Activated naive CD4-positive, alpha-beta T cell treated with anti-CD3 and anti-CD28 coated beads for 36 hours (primary cell): ENCODE measurements at regions of chr5 and their contacts with region 1.

Region 1: DNA sequence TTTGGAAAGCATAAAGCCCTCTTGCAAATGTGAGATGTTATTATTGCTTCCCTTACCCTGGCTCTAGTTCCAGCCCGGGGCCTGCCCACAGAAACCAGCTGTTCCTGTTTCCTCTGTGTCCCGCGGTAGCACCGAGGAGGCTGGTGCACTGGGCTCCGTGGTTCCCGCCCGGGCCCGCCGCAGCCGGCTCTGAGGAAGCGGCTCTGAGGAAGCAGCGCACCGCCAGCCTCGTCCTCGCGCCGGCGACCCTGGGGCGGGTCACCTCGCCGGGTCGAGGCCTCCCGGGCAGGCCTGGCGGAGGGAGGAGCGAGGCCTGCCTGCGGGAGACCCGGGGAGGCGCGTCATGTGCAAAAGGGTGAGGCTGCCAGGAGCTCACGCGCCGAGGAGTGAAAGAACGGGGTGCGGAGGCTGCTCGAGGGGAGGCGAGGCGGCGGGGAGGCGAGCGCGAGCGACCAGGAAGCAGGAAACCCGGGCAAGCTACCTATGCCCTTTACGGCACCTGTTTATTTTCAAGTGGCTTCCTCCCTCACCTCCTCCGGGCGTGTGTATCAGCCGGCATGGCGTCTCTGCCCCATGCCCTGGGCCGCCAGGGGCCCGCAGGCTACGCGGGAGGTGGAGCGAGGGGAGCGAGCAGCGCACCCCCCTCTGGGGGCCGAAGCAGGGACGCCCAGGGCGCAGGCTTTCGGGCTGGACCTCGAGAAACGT is 61.3 kb upstream of the MEGF10 start:
- DNase-seq: peak; percentile 62
- H3K4me3 Mint-ChIP-seq: peak overlapping the region; percentile 66
- H3K27ac Mint-ChIP-seq: no peak overlapping the region
- H3K4me1 Mint-ChIP-seq: peaks cover 8% of the 10 kb centered on the region
- H3K27me3 Mint-ChIP-seq: no peaks in the 10 kb centered on the region

Region 2: DNA sequence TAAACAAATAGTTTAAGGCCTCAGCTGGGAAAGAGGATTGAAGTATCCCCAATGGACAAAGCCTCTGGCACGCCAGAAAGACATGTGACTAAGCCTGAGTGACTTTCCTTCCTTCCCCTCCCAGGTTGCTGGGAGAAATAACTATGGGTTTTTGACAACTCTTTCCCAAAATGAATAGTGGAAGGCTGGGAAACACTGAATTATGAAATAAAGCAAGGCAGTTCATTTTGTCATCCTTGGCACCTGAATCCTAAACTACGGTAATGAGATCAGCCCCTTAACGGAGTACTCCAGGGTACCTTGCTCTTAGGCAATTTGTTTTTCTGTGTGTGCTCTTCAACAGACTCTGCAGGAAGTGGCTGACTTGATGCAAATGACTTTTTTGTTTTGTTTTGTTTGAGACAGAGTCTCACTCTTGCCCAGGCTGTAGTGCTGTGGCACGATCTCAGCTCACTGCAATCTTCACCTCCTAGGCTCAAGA is 377.2 kb before region 1 on chr5:
- CTCF ChIA-PET with region 1: no interaction called
- intact Hi-C with region 1: loop called (anchors 5 kb)
- DNase-seq: peak; percentile 24
- H3K4me3 Mint-ChIP-seq: no peak overlapping the region
- H3K27ac Mint-ChIP-seq: peak overlapping the region; percentile 81
- H3K4me1 Mint-ChIP-seq: peaks cover 50% of the 10 kb centered on the region
- H3K27me3 Mint-ChIP-seq: no peaks in the 10 kb centered on the region

Region 3: DNA sequence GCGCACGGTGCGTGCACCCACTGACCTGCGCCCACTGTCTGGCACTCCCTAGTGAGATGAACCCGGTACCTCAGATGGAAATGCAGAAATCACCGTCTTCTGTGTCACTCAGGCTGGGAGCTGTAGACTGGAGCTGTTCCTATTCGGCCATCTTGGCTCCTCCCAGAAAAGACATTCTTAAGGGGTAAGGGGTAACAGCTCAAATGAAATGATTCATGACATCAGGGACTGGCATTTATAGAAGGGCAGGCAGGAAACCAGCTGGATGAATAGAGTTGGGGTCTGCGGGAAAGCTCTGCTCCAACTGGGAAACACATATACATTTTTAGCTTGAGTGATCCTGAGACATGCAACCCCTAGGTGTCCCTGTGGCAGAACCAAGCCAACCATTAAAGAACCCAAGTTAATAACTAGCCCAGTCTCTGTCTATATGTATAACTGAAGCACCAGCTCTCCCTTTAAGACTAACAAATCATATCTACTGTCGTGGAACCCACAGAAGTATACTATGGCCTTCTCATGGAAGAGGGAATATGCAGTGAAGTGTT is 333.1 kb before region 1 on chr5:
- CTCF ChIA-PET with region 1: no interaction called
- intact Hi-C with region 1: no loop called
- DNase-seq: no peak
- H3K4me3 Mint-ChIP-seq: no peak overlapping the region
- H3K27ac Mint-ChIP-seq: no peak overlapping the region
- H3K4me1 Mint-ChIP-seq: no peaks in the 10 kb centered on the region
- H3K27me3 Mint-ChIP-seq: no peaks in the 10 kb centered on the region

Region 4: GRCh38 chr5:126961702-126962101 is 267.6 kb before region 1 on chr5:
- CTCF ChIA-PET with region 1: no interaction called
- intact Hi-C with region 1: loop called (anchors 5 kb)
- DNase-seq: no peak
- H3K4me3 Mint-ChIP-seq: no peak overlapping the region
- H3K27ac Mint-ChIP-seq: no peak overlapping the region
- H3K4me1 Mint-ChIP-seq: no peaks in the 10 kb centered on the region
- H3K27me3 Mint-ChIP-seq: no peaks in the 10 kb centered on the region

Region 5: DNA sequence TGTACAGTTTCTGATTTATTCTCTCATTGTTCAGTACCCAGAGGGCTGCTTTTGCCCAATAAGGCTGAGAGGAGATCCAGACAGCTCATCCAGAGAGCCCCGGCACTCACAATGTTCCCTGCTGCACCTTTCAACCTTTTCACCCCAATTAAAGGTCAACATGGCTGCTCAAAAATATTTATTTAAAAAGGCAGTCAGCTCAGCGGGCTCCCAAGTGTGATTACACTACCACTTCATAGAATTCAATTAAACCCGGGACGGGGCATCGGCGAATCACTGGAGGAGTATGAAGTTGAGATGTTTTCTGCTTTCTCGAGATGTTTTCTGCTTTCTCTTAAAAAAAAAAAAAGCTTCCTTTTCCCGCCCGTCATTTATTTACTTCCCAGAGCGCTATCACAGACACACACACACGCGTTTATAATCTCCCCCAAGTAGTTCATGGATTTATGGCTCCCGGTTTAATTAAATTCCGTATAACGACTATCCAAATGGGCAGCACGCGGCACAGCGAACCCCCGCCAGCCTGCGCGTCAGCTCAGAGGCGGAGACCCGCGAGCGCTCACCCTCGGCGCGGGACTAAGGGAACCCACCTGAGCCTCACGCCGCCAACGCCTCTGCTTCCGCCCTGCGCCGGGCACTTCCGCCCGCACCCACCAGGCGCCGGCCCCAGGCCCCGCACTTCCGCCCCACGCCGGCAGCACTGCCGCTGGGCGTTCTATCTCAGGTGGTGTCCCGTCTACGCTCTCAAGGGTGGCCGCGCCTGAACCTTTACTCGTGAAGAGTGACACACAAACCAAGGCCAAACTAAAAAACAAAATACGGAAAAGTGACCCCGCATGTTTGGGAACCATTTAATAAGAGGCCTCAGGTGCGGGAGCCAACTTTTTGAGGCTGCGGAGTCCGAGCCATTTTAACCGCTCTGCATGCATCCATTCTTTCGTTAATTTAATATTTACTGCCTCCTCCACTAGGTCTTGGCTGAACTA is 156.2 kb before region 1 on chr5 and contains the start of gene C5orf63:
- CTCF ChIA-PET with region 1: no interaction called
- intact Hi-C with region 1: loop called (anchors 5 kb)
- DNase-seq: peak; percentile 82
- H3K4me3 Mint-ChIP-seq: peak within 1 kb of the TSS; percentile 92
- H3K27ac Mint-ChIP-seq: peak within 1 kb of the TSS; percentile 90
- H3K4me1 Mint-ChIP-seq: peaks cover 21% of the 10 kb centered on the region
- H3K27me3 Mint-ChIP-seq: no peaks in the 10 kb centered on the region
- total RNA-seq, gene C5orf63: 9.4 to 11.6 TPM